Mammary epithelial cell (primary cell): ENCODE measurements at regions of chr7 and their contacts with region 1.

Region 1: DNA sequence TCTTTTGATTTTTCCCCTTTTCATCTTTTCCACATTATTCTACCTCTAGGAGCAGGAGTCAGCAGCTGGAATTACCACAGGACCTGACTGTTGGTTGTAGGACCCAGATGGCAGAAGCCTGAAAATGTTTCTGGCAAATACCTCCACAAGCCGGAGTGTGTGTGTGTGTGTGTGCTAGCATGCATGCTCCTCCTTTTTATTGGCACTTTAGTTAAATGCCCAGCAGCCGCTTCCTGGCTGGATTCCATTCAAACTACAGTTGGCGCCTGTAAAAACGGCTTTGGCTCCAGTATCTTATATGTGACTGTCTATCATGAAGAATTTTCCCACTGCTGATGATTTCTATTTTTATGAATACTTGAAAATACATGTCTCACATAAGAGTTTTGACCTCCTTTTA is 319.7 kb upstream of the SP4 start:
- DNase-seq: no peak
- H3K4me3 ChIP-seq: no peak overlapping the region
- H3K27ac ChIP-seq: no peak overlapping the region
- H3K4me1 ChIP-seq: peaks cover 29% of the 10 kb centered on the region
- H3K27me3 ChIP-seq: no peaks in the 10 kb centered on the region
- CTCF ChIP-seq: no peak

Region 2: GRCh38 chr7:19944363-19945120 is 1163.6 kb before region 1 on chr7:
- CTCF ChIA-PET with region 1: no interaction called
- dilution Hi-C with region 1: no loop called
- in situ Hi-C with region 1: no loop called
- intact Hi-C with region 1: no loop called
- DNase-seq: peak; percentile 81
- H3K4me3 ChIP-seq: no peak overlapping the region
- H3K27ac ChIP-seq: peak overlapping the region; percentile 0
- H3K4me1 ChIP-seq: peaks cover 15% of the 10 kb centered on the region
- H3K27me3 ChIP-seq: no peaks in the 10 kb centered on the region
- CTCF ChIP-seq: no peak

Region 3: GRCh38 chr7:20895563-20895962 is 212.6 kb before region 1 on chr7:
- CTCF ChIA-PET with region 1: no interaction called
- dilution Hi-C with region 1: no loop called
- in situ Hi-C with region 1: no loop called
- intact Hi-C with region 1: loop called (anchors 1 kb)
- DNase-seq: peak; percentile 91
- H3K4me3 ChIP-seq: no peak overlapping the region
- H3K27ac ChIP-seq: peak overlapping the region; percentile 92
- H3K4me1 ChIP-seq: peaks cover 29% of the 10 kb centered on the region
- H3K27me3 ChIP-seq: no peaks in the 10 kb centered on the region
- CTCF ChIP-seq: no peak

Region 4: DNA sequence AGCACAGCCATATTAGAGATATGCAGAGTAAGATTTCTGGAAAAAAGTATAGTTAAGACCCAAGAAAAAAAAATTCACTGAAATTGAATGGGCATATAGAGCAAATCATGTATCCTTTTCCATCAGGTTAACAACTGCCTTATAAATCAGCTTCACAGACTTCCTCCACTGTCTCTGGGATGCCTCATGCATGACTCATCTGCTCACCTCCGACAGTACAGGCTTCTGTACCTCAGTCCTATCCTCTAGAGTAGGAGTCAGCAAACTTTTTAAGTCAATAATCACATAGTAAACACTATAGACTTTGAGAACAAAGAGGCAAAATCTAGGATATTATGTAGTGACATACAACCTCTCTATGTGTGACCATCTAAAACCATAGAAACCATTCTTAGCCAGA is 109.9 kb before region 1 on chr7:
- CTCF ChIA-PET with region 1: no interaction called
- dilution Hi-C with region 1: no loop called
- in situ Hi-C with region 1: loop called in 1 of 2 experiments (anchors 10 kb)
- intact Hi-C with region 1: loop called (anchors 5 kb)
- DNase-seq: peak; percentile 78
- H3K4me3 ChIP-seq: no peak overlapping the region
- H3K27ac ChIP-seq: no peak overlapping the region
- H3K4me1 ChIP-seq: peaks cover 20% of the 10 kb centered on the region
- H3K27me3 ChIP-seq: no peaks in the 10 kb centered on the region
- CTCF ChIP-seq: no peak

Region 5: DNA sequence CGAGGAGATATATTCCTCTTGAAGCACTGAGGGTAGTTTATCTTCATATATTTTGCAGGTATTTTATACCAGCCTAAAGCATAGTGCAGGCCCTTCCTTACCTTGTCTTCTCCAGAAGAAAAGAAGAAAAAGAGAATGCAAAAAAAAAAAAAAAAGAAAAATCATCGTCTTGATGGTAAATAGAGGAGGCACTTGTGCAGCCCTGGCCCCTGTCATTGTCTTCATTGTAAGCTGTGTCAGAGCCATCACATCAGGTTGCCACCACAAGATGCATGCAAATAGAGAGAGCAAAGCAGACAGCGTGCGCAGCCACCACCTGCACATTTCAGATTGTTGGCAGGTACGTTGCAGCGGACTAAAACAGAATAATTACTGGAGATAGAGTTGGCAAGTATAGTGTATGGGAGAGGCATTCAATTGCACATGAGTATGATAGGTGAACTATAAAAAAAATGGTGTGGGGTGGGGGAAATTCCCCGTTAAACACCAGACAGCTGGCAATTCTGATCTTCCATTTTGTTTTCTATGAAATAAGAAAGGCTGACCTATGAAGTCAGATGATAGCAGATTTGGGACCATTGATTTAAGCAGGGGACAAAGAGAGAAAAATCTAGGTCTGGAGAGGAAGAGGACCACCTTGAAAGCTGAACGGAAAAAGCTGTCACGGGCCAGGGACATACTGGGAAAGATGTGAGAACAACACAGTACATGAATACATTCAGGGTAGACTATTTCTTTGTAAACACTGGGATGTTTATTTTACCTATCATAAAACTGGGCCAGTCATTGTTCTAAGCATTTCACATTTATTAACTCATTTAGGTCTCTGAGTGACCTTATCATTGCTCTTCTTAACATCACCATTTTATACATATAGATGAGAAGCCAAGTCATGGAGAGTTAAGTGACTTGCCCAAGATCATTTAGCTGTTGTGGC is 15.1 kb before region 1 on chr7:
- CTCF ChIA-PET with region 1: no interaction called
- dilution Hi-C with region 1: no loop called
- in situ Hi-C with region 1: no loop called
- intact Hi-C with region 1: no loop called
- DNase-seq: no peak
- H3K4me3 ChIP-seq: no peak overlapping the region
- H3K27ac ChIP-seq: no peak overlapping the region
- H3K4me1 ChIP-seq: no peaks in the 10 kb centered on the region
- H3K27me3 ChIP-seq: no peaks in the 10 kb centered on the region
- CTCF ChIP-seq: no peak

Region 6: DNA sequence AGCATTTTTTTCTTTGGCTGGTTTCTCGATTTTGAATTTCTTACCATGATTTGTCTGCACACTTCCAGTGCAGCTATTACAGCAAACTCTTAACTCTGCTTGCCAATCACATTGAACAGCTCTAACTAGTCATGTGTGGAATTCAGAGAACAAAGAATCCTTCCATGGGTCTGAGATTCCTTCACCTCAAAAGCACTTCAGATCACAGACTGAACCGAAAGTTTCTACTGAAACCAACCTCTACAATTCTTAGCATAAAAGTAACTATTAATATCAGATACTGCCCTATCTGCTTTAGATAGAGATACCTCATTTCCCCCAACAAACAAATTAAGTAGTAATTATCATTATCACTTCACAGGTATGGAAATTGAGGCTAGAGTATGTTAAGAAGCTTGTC is 263.2 kb after region 1 on chr7:
- CTCF ChIA-PET with region 1: no interaction called
- dilution Hi-C with region 1: no loop called
- in situ Hi-C with region 1: no loop called
- intact Hi-C with region 1: no loop called
- DNase-seq: no peak
- H3K4me3 ChIP-seq: no peak overlapping the region
- H3K27ac ChIP-seq: no peak overlapping the region
- H3K4me1 ChIP-seq: no peaks in the 10 kb centered on the region
- H3K27me3 ChIP-seq: no peaks in the 10 kb centered on the region
- CTCF ChIP-seq: no peak